Sigmoid colon (tissue), 7 donors: ENCODE measurements at regions of chr1 and their contacts with region 1.

Region 1: GRCh38 chr1:37989361-37989930 is 376 bp downstream of the SF3A3 start:
- DNase-seq: peak; percentile 70
- H3K4me3 ChIP-seq: peak overlapping the region; percentile 76 to 100 (median 83)
- H3K27ac ChIP-seq: peak overlapping the region; percentile 78 to 90 (median 86)
- H3K4me1 ChIP-seq: peaks cover 0 to 19% (median 18%) of the 10 kb centered on the region in 4 donors
- H3K27me3 ChIP-seq: no peaks in the 10 kb centered on the region
- CTCF ChIP-seq: no peak
- EP300 ChIP-seq: no peak
- POLR2A ChIP-seq: no peak

Region 2: GRCh38 chr1:37890378-37891014 is 99.0 kb before region 1 on chr1:
- intact Hi-C with region 1: no loop called
- DNase-seq: no peak
- H3K4me3 ChIP-seq: no peak overlapping the region
- H3K27ac ChIP-seq: peak overlapping the region in 1 of 4 donors; percentile 13
- H3K4me1 ChIP-seq: no peaks in the 10 kb centered on the region
- H3K27me3 ChIP-seq: no peaks in the 10 kb centered on the region
- CTCF ChIP-seq: peak in 2 of 4 experiments; percentile 23 to 33
- EP300 ChIP-seq: no peak
- POLR2A ChIP-seq: no peak

Region 3: DNA sequence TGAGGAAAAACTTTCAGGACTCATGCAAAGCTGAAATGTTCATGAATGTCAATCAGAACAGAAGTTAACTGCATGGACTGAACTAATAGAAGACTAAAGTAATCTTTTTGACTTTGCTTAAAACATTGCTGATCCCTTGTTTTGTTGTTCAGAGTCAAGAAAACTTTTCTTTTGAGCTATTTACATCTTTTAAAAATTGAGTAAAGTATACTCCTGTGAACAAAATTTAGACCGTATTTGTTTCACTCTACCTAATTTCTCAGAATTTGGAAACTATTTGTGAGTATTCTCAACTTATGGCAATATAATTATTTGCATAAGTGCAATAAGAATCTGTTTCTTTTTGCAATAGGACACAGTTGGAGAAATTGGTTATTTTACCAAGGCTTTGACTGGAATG is 83.7 kb before region 1 on chr1:
- intact Hi-C with region 1: no loop called
- DNase-seq: no peak
- H3K4me3 ChIP-seq: no peak overlapping the region
- H3K27ac ChIP-seq: no peak overlapping the region
- H3K4me1 ChIP-seq: no peaks in the 10 kb centered on the region
- H3K27me3 ChIP-seq: no peaks in the 10 kb centered on the region
- CTCF ChIP-seq: no peak
- EP300 ChIP-seq: no peak
- POLR2A ChIP-seq: no peak

Region 4: GRCh38 chr1:37946703-37947360 is 42.6 kb before region 1 on chr1 and contains the start of gene INPP5B:
- intact Hi-C with region 1: loop called (anchors 5 kb)
- DNase-seq: peak; percentile 95
- H3K4me3 ChIP-seq: peak within 1 kb of the TSS; percentile 71 to 87 (median 78)
- H3K27ac ChIP-seq: peak within 1 kb of the TSS; percentile 87 to 94 (median 90)
- H3K4me1 ChIP-seq: peaks cover 0 to 27% (median 21%) of the 10 kb centered on the region in 4 donors
- H3K27me3 ChIP-seq: no peaks in the 10 kb centered on the region
- CTCF ChIP-seq: peak in 1 of 4 experiments; percentile 21
- EP300 ChIP-seq: no peak
- POLR2A ChIP-seq: peak; percentile 41 to 54
- total RNA-seq, gene INPP5B: 29.0 to 34.1 (median 31.7) TPM

Region 5: GRCh38 chr1:38015978-38016725 is 26.7 kb after region 1 on chr1:
- intact Hi-C with region 1: loop called (anchors 1 kb)
- DNase-seq: peak; percentile 87
- H3K4me3 ChIP-seq: peak overlapping the region in 1 of 4 donors; percentile 12
- H3K27ac ChIP-seq: peak overlapping the region; percentile 74 to 98 (median 96)
- H3K4me1 ChIP-seq: peaks cover 0 to 53% (median 47%) of the 10 kb centered on the region in 4 donors
- H3K27me3 ChIP-seq: no peaks in the 10 kb centered on the region
- CTCF ChIP-seq: peak in 1 of 4 experiments; percentile 16
- EP300 ChIP-seq: peak in 3 of 4 donors; percentile 10 to 93 (median 46)
- POLR2A ChIP-seq: no peak

Region 6: GRCh38 chr1:38037221-38037939 is 47.9 kb after region 1 on chr1:
- intact Hi-C with region 1: no loop called
- DNase-seq: no peak
- H3K4me3 ChIP-seq: no peak overlapping the region
- H3K27ac ChIP-seq: no peak overlapping the region
- H3K4me1 ChIP-seq: no peaks in the 10 kb centered on the region
- H3K27me3 ChIP-seq: peaks cover 0 to 40% (median 20%) of the 10 kb centered on the region in 3 donors
- CTCF ChIP-seq: no peak
- EP300 ChIP-seq: no peak
- POLR2A ChIP-seq: no peak